GM13976 (cell line): ENCODE measurements at regions of chr6 and their contacts with region 1.

Region 1: GRCh38 chr6:43391440-43392031 is 22.1 kb upstream of the ZNF318 start:
- DNase-seq: no peak
- CTCF ChIP-seq: no peak

Region 2: GRCh38 chr6:43506667-43507471 is 115.3 kb after region 1 on chr6:
- in situ Hi-C with region 1: loop called (anchors 10 kb)
- DNase-seq: peak; percentile 88
- CTCF ChIP-seq: peak; percentile 88

Region 3: GRCh38 chr6:43604174-43604573 is 212.6 kb after region 1 on chr6:
- in situ Hi-C with region 1: no loop called
- DNase-seq: no peak
- CTCF ChIP-seq: no peak